ENCODE measurements at regions of chr11 and their contacts with region 1.

Region 1: GRCh38 chr11:58165504-58166106 is 23.3 kb upstream of the OR9Q2 start:
- DNase-seq: peak; percentile 70 to 79
- H3K4me3 ChIP-seq: no peak overlapping the region
- H3K4me3 Mint-ChIP-seq: peak overlapping the region; percentile 47
- H3K27ac Mint-ChIP-seq: peak overlapping the region; percentile 79
- H3K4me1 ChIP-seq: peaks cover 38% of the 10 kb centered on the region
- H3K4me1 Mint-ChIP-seq: peaks cover 36% of the 10 kb centered on the region
- H3K27me3 ChIP-seq: no peaks in the 10 kb centered on the region
- H3K27me3 Mint-ChIP-seq: no peaks in the 10 kb centered on the region
- CTCF ChIP-seq: no peak

Region 2: GRCh38 chr11:58192229-58192628 is 26.6 kb after region 1 on chr11:
- CTCF ChIA-PET with region 1: no interaction called
- POLR2A ChIA-PET with region 1: no interaction called
- intact Hi-C with region 1: loop called (anchors 1 kb)
- DNase-seq: peak; percentile 71 to 87
- H3K4me3 ChIP-seq: no peak overlapping the region
- H3K4me3 Mint-ChIP-seq: peak overlapping the region; percentile 27
- H3K27ac Mint-ChIP-seq: peak overlapping the region; percentile 83
- H3K4me1 ChIP-seq: peaks cover 44% of the 10 kb centered on the region
- H3K4me1 Mint-ChIP-seq: peaks cover 37% of the 10 kb centered on the region
- H3K27me3 ChIP-seq: no peaks in the 10 kb centered on the region
- H3K27me3 Mint-ChIP-seq: no peaks in the 10 kb centered on the region
- CTCF ChIP-seq: no peak